Gastrocnemius medialis (tissue), 4 donors: ENCODE measurements at regions of chr7 and their contacts with region 1.

Region 1: DNA sequence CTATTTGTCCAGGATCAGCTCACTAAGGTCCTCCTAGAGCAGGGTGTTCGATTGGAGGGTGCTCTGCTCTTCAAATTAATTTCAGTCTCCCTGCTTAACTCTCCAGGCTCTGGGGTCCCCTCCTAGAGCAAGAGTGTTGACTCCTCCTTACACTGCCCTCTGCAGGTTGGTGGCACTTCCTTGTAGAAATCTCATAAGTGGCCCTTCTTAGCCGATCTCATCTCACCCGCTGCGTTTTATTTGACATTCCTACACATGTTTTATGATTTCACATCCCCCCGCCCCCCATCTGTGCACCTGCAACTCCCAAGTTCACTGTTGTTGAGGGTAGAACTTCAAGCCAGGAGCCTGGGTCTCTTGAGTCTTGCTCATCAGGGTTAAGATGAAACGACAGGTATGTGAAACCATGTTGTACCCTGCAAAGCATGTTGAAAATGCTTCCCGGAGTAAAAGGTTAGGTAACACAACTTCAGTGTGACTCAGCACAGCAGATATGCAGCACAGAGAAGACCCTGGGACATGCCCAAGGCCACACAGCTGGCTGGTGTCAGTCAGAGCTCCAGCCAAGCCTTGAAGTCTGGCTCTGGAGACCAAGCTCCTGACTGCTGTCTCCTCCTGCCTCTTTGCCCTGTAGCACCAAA is 171.2 kb downstream of the PRKAG2 start:
- DNase-seq: peak; percentile 75 to 91
- ATAC-seq: peak; percentile 73 to 83
- H3K4me3 ChIP-seq: peak overlapping the region in 1 of 4 donors; percentile 11
- H3K27ac ChIP-seq: peak overlapping the region; percentile 57 to 73 (median 69)
- H3K4me1 ChIP-seq: peaks cover 29 to 33% of the 10 kb centered on the region in 2 donors
- H3K27me3 ChIP-seq: no peaks in the 10 kb centered on the region
- CTCF ChIP-seq: peak; percentile 38 to 60 (median 53)
- POLR2A ChIP-seq: peak in 1 of 2 donors; percentile 37

Region 2: GRCh38 chr7:151744656-151745638 is 39.2 kb after region 1 on chr7:
- in situ Hi-C with region 1: no loop called
- intact Hi-C with region 1: loop called (anchors 1 kb)
- DNase-seq: peak; percentile 98 to 99
- ATAC-seq: peak; percentile 76 to 78
- H3K4me3 ChIP-seq: no peak overlapping the region
- H3K27ac ChIP-seq: peak overlapping the region; percentile 76 to 90 (median 80)
- H3K4me1 ChIP-seq: peaks cover 36% of the 10 kb centered on the region in 2 donors
- H3K27me3 ChIP-seq: no peaks in the 10 kb centered on the region
- CTCF ChIP-seq: peak in 3 of 5 experiments; percentile 22 to 67 (median 60)
- POLR2A ChIP-seq: peak; percentile 29 to 55